K562 (cell line): ENCODE measurements at regions of chr19 and their contacts with region 1.

Region 1: DNA sequence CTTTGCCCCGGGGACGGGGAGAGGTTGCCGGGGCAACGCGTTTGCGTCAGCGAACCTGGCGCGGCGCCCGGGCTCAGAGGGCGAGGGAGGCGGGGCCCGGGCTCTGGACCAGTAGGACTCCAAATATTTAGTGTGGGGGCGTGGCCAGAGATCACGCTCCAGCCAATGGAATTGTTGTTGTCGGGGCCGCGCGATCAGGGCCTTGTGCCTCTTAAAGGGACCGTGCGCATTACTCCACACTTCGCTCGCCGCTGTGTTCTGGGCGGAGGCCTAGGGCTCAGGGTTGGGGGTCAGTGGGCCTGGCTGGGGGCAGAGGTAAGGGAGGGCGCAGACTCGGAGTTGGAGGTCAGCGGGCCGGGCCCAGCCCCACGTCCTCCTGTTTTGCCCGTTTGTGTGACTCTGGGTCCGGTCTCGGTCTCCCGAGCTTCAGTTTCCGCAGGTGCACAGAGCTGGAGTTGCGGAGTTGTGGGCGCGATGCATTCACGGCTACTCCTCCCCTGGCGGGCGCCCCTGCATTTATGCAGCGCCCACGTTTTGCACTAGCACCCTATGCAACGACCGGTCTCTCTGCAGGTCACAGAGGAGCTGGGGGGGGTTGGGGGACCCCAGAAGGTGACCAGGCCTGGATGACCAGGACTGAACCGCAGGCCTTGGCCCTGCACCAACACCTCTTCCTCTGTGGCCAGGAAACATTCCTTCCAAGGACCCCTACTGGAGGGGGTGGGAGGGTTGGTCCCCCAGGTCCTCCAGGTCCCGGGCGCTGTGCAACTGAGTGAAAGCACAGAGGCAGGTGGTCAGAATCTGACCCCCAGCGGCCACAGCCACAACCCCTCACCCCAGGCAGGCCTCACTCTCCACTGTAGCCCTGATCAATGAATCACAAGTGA is 10.7 kb upstream of the MKNK2 start:
- DNase-seq: peak; percentile 97 to 100 (median 98)
- ATAC-seq: peak; percentile 76
- H3K4me3 ChIP-seq: peak overlapping the region; percentile 76
- H3K27ac ChIP-seq: peak overlapping the region; percentile 100
- H3K4me1 ChIP-seq: peaks cover 42 to 75% of the 10 kb centered on the region in 2 experiments
- H3K27me3 ChIP-seq: no peaks in the 10 kb centered on the region
- CTCF ChIP-seq: peak in 2 of 3 experiments; percentile 34 to 50; a peak in 2 of 6 replicates
- EP300 ChIP-seq: peak; percentile 6; the same call in 1 of the 2 replicates
- POLR2A ChIP-seq: peak; percentile 79
- RAD21 ChIP-seq: peak; percentile 46 to 65

Region 2: GRCh38 chr19:1929021-1929742 is 132.6 kb before region 1 on chr19:
- CTCF ChIA-PET with region 1: interaction called, 3 read pairs
- POLR2A ChIA-PET with region 1: no interaction called
- in situ Hi-C with region 1: no loop called
- intact Hi-C with region 1: loop called (anchors 5 kb)
- DNase-seq: peak; percentile 86 to 88 (median 87)
- ATAC-seq: peak; percentile 98
- H3K4me3 ChIP-seq: no peak overlapping the region
- H3K27ac ChIP-seq: no peak overlapping the region
- H3K4me1 ChIP-seq: peaks cover 3 to 30% of the 10 kb centered on the region in 2 experiments; a peak in 3 of 5 replicates
- H3K27me3 ChIP-seq: no peaks in the 10 kb centered on the region
- CTCF ChIP-seq: peak; percentile 86 to 93 (median 88)
- EP300 ChIP-seq: no peak
- POLR2A ChIP-seq: no peak
- RAD21 ChIP-seq: peak; percentile 77 to 85

Region 3: DNA sequence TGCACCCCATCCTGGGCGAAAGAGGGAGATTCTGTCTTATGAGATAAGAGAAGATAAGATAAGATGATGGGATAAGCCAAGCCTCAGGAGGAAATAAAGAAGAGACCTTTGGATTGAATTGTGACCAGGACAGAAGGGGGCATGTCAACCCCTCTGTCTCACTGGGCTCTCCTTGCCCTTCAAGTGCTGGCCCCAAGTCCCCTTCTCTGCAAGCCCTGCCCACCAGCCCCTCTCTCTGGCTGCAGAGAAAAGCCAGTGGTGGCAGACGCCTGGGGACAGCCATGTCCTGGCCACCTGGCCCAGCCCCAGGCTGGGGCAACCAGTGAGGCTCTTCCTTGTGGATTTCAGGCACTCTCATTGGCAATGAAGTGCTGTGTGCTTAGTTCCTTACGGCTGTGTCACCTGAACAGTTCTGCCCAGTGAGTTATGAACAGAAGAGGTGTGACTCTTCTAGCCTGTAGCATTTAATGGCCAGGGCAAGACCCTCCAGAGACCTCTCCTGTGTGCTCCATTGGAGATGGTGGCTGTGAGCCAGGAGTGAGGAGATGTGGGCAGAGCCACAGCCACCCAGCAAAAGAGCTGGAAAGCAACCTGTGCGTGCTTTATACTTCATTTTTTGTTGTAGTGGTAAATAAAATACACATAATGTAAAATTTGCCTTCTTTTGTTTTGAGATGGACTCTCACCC is 40.1 kb before region 1 on chr19:
- CTCF ChIA-PET with region 1: interaction called, 4 read pairs
- POLR2A ChIA-PET with region 1: interaction called, 3 read pairs
- in situ Hi-C with region 1: loop called (anchors 5 kb)
- intact Hi-C with region 1: no loop called
- DNase-seq: no peak
- ATAC-seq: no peak
- H3K4me3 ChIP-seq: no peak overlapping the region
- H3K27ac ChIP-seq: no peak overlapping the region
- H3K4me1 ChIP-seq: peaks cover 0 to 8% of the 10 kb centered on the region in 2 experiments; a peak in 2 of 5 replicates
- H3K27me3 ChIP-seq: no peaks in the 10 kb centered on the region
- CTCF ChIP-seq: no peak
- EP300 ChIP-seq: no peak
- POLR2A ChIP-seq: no peak
- RAD21 ChIP-seq: no peak

Region 4: GRCh38 chr19:2041683-2042484 is 19.9 kb before region 1 on chr19:
- CTCF ChIA-PET with region 1: no interaction called
- POLR2A ChIA-PET with region 1: interaction called, 72 read pairs
- in situ Hi-C with region 1: no loop called
- intact Hi-C with region 1: no loop called
- DNase-seq: peak; percentile 91 to 99 (median 96)
- ATAC-seq: peak; percentile 81
- H3K4me3 ChIP-seq: peak overlapping the region; percentile 29
- H3K27ac ChIP-seq: peak overlapping the region; percentile 90
- H3K4me1 ChIP-seq: peaks cover 18 to 83% of the 10 kb centered on the region in 2 experiments
- H3K27me3 ChIP-seq: no peaks in the 10 kb centered on the region
- CTCF ChIP-seq: no peak
- EP300 ChIP-seq: no peak; the same call in 1 of the 2 replicates
- POLR2A ChIP-seq: 0 out of 2 replicates have a peak, but pooled peaks have one; percentile 39
- RAD21 ChIP-seq: no peak

Region 5: GRCh38 chr19:2050991-2051772 is 10.6 kb before region 1 on chr19 and contains the start of gene MKNK2:
- CTCF ChIA-PET with region 1: interaction called, 4 read pairs
- POLR2A ChIA-PET with region 1: interaction called, 72 read pairs
- in situ Hi-C with region 1: no loop called
- intact Hi-C with region 1: no loop called
- DNase-seq: peak; percentile 87 to 97 (median 91)
- ATAC-seq: peak; percentile 72
- H3K4me3 ChIP-seq: peak within 1 kb of the TSS; percentile 90
- H3K27ac ChIP-seq: peak within 1 kb of the TSS; percentile 90
- H3K4me1 ChIP-seq: peaks cover 31 to 78% of the 10 kb centered on the region in 2 experiments
- H3K27me3 ChIP-seq: no peaks in the 10 kb centered on the region
- CTCF ChIP-seq: peak; percentile 72 to 88 (median 73)
- EP300 ChIP-seq: no peak
- POLR2A ChIP-seq: peak; percentile 90
- RAD21 ChIP-seq: peak in 1 of 2 experiments; percentile 29; a peak in 2 of 4 replicates
- polyA plus RNA-seq, gene MKNK2: 5.1 to 5.5 TPM

Region 6: DNA sequence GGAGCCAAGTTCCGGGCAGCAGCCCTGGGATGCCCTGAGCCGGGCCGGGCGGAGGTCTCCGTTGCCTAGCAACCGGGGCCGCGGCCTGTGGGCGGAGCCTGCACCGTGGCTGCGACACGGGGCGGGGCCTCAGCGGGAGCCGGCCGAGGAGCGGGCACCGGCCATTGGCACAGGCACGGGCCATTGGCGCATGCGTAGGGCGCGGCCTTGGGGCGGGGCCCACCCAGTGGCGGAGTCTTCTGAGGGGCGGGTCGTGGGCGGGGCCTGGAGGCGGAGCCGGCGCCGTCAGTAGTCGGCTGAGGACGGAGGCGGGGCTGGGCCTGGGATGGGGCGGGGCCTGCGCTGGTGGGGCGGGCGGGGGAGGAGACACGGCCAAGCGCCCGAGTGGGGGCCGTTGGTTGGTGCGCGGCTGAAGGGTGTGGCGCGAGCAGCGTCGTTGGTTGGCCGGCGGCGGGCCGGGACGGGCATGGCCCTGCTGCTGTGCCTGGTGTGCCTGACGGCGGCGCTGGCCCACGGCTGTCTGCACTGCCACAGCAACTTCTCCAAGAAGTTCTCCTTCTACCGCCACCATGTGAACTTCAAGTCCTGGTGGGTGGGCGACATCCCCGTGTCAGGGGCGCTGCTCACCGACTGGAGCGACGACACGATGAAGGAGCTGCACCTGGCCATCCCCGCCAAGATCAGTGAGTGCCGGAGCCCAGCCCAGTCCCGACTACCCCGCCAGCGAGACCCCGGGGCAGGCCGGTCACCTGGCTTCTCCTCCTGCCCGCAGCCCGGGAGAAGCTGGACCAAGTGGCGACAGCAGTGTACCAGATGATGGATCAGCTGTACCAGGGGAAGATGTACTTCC is 35.0 kb after region 1 on chr19 and contains the start of gene IZUMO4:
- CTCF ChIA-PET with region 1: no interaction called
- POLR2A ChIA-PET with region 1: interaction called, 10 read pairs
- in situ Hi-C with region 1: no loop called
- intact Hi-C with region 1: no loop called
- DNase-seq: peak; percentile 97 to 99 (median 98)
- ATAC-seq: peak; percentile 94
- H3K4me3 ChIP-seq: peak within 1 kb of the TSS; percentile 97
- H3K27ac ChIP-seq: peak within 1 kb of the TSS; percentile 88
- H3K4me1 ChIP-seq: peaks cover 5 to 63% of the 10 kb centered on the region in 2 experiments; a peak in 4 of 5 replicates
- H3K27me3 ChIP-seq: no peaks in the 10 kb centered on the region
- CTCF ChIP-seq: peak; percentile 42 to 70 (median 66); a peak in 5 of 6 replicates
- EP300 ChIP-seq: no peak
- POLR2A ChIP-seq: no peak
- RAD21 ChIP-seq: peak in 1 of 2 experiments; percentile 27; a peak in 1 of 4 replicates
- polyA plus RNA-seq, gene IZUMO4: 0.07 to 0.13 TPM

Region 7: GRCh38 chr19:3434712-3435553 is 1373.2 kb after region 1 on chr19:
- CTCF ChIA-PET with region 1: no interaction called
- POLR2A ChIA-PET with region 1: no interaction called
- in situ Hi-C with region 1: no loop called
- intact Hi-C with region 1: no loop called
- DNase-seq: peak; percentile 96 to 97 (median 97)
- ATAC-seq: peak; percentile 99
- H3K4me3 ChIP-seq: peak overlapping the region; percentile 53
- H3K27ac ChIP-seq: peak overlapping the region; percentile 96
- H3K4me1 ChIP-seq: peaks cover 4 to 20% of the 10 kb centered on the region in 2 experiments; a peak in 4 of 5 replicates
- H3K27me3 ChIP-seq: no peaks in the 10 kb centered on the region
- CTCF ChIP-seq: no peak
- EP300 ChIP-seq: no peak; the same call in 1 of the 2 replicates
- POLR2A ChIP-seq: peak; percentile 82
- RAD21 ChIP-seq: no peak